Activated CD4-positive, alpha-beta T cell treated with anti-CD3 and anti-CD28 coated beads for 36 hours (primary cell): ENCODE measurements at regions of chr2 and their contacts with region 1.

Region 1: GRCh38 chr2:27723372-27724144 is 48.0 kb upstream of the MRPL33 start:
- DNase-seq: peak; percentile 57
- ATAC-seq: no peak
- H3K4me3 Mint-ChIP-seq: no peak overlapping the region
- H3K27ac Mint-ChIP-seq: no peak overlapping the region
- H3K4me1 Mint-ChIP-seq: peaks cover 30% of the 10 kb centered on the region
- H3K27me3 Mint-ChIP-seq: no peaks in the 10 kb centered on the region

Region 2: DNA sequence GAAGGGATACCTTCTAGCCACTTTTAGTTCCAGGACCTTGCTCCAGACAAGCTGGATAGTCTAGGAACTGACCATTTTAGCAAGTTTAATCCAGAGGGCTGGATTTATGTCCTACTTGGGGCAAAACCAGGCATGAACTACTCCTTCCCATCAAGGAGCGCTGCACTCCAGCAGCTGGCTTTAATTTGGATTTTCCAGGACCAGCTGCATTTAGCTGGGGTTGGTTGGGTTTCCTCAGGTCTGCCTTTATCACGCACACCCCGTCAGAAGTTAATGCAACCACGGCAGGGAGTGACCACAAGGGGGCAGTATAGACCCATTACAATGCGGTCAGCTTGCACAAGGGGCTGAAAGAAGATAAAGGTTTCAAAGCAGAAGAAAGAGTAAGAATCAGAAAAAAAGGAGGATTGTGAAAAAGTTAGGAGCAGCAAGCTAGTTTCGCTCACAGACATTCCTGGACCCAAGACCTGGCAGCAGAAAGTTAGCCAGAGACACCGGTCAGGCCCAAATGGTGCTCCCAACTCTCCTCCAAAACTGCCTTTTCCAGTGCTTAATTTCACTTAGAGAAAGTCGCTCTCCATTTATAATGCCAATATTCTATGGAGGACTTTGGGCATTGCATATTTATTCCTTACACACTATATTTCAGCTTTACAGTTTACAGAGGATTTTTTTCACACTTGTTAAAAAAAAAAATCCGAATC is 19.8 kb before region 1 on chr2:
- CTCF ChIA-PET with region 1: interaction called, 14 read pairs
- POLR2A ChIA-PET with region 1: interaction called, 3 read pairs
- intact Hi-C with region 1: no loop called
- DNase-seq: peak; percentile 92
- ATAC-seq: peak; percentile 78
- H3K4me3 Mint-ChIP-seq: no peak overlapping the region
- H3K27ac Mint-ChIP-seq: peak overlapping the region; percentile 7
- H3K4me1 Mint-ChIP-seq: peaks cover 21% of the 10 kb centered on the region
- H3K27me3 Mint-ChIP-seq: no peaks in the 10 kb centered on the region

Region 3: DNA sequence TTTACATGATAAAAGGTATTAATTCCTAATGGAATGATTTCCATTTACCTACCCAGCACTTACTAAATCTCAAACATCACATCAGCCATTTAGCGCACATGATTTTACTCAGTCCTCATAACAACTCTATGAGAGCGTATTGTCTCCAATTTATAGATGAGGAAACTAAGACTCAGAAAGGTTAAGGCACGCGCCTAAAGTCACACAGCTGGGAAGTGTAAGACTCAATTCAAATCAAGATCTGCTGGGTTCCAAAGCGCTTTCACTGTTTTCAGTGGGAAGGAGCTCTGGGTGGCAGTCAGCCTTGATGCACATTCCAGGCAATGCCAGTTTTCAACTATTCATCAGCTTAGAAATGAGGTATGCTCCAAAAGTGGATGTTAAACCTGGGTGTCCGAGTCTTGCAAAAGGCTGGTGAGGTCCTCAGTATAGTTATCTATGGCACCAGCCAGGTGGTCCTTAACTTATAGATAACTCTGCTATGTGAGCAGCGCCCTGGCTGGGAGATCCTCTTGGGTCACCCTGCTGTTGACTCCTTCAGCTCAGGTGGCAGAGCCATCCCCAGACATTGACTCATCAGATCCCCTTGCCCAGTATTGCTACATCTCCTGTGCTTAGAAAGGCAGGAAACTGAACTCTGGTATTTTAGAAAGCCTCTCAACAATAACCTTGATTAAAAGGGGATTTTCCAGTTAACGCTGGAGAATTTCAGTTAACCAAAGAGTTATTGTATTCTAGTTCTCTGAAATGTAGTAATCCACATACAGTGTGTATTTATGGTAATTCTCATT is 12.7 kb before region 1 on chr2:
- CTCF ChIA-PET with region 1: interaction called, 14 read pairs
- POLR2A ChIA-PET with region 1: interaction called, 3 read pairs
- intact Hi-C with region 1: no loop called
- DNase-seq: no peak
- ATAC-seq: peak; percentile 45
- H3K4me3 Mint-ChIP-seq: no peak overlapping the region
- H3K27ac Mint-ChIP-seq: no peak overlapping the region
- H3K4me1 Mint-ChIP-seq: peaks cover 25% of the 10 kb centered on the region
- H3K27me3 Mint-ChIP-seq: peaks cover 4% of the 10 kb centered on the region

Region 4: GRCh38 chr2:27735263-27735953 is 11.8 kb after region 1 on chr2:
- CTCF ChIA-PET with region 1: interaction called, 14 read pairs
- POLR2A ChIA-PET with region 1: no interaction called
- intact Hi-C with region 1: no loop called
- DNase-seq: peak; percentile 86
- ATAC-seq: peak; percentile 91
- H3K4me3 Mint-ChIP-seq: peak overlapping the region; percentile 67
- H3K27ac Mint-ChIP-seq: peak overlapping the region; percentile 93
- H3K4me1 Mint-ChIP-seq: peaks cover 20% of the 10 kb centered on the region
- H3K27me3 Mint-ChIP-seq: no peaks in the 10 kb centered on the region

Region 5: GRCh38 chr2:27742571-27742970 is 19.0 kb after region 1 on chr2:
- CTCF ChIA-PET with region 1: interaction called, 13 read pairs
- POLR2A ChIA-PET with region 1: no interaction called
- intact Hi-C with region 1: no loop called
- DNase-seq: no peak
- ATAC-seq: no peak
- H3K4me3 Mint-ChIP-seq: no peak overlapping the region
- H3K27ac Mint-ChIP-seq: no peak overlapping the region
- H3K4me1 Mint-ChIP-seq: no peaks in the 10 kb centered on the region
- H3K27me3 Mint-ChIP-seq: peaks cover 3% of the 10 kb centered on the region

Region 6: DNA sequence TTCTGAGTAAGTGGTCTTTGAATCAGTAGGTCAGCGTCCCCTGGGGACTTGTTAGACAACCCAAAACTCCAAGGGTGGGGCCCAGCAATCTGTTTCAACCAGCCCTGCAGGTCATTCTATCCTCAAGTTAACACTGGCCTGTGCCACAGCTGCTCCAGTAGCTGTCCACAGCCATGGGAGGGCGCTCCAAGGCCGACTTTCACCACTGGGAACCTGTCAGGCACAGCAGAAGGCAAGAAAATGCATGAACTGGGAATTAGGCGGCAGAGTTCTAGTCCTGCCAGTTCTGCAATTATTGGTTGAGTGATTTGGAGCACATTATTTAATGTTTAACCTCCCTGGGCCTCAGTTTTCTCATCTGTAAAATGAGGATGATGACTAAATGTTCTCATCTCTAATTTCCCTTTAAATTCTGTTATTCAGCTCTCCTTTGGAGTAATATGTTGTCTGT is 30.6 kb after region 1 on chr2:
- CTCF ChIA-PET with region 1: interaction called, 20 read pairs
- POLR2A ChIA-PET with region 1: no interaction called
- intact Hi-C with region 1: no loop called
- DNase-seq: peak; percentile 92
- ATAC-seq: peak; percentile 99
- H3K4me3 Mint-ChIP-seq: no peak overlapping the region
- H3K27ac Mint-ChIP-seq: no peak overlapping the region
- H3K4me1 Mint-ChIP-seq: peaks cover 3% of the 10 kb centered on the region
- H3K27me3 Mint-ChIP-seq: peaks cover 3% of the 10 kb centered on the region

Region 7: DNA sequence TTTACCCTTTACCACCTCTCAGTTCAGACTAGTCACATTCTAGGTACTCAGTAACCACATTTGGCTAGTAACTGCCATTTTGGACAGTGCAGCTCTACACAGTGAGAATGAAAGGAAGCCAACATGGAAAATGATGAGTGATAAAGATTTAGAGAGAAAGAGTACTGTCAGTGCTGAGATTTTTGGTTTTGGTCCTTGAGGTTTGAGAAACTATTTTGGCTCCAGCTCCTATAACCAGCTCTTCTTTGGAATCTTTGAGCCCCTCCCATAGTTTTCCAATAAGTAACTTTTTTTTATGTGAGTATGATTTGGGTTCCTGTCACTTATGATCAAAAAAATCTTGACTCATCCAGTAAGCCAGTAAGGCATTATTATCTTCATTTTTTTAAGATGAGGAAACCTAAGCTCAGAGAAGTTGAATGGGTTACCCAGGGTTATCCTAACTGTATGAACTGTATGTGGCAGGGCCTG is 340.0 kb after region 1 on chr2:
- CTCF ChIA-PET with region 1: no interaction called
- POLR2A ChIA-PET with region 1: interaction called, 10 read pairs
- intact Hi-C with region 1: no loop called
- DNase-seq: no peak
- ATAC-seq: peak; percentile 98
- H3K4me3 Mint-ChIP-seq: no peak overlapping the region
- H3K27ac Mint-ChIP-seq: no peak overlapping the region
- H3K4me1 Mint-ChIP-seq: peaks cover 14% of the 10 kb centered on the region
- H3K27me3 Mint-ChIP-seq: no peaks in the 10 kb centered on the region